Ovary (tissue), 10 donors: ENCODE measurements at regions of chr9 and their contacts with region 1.

Region 1: DNA sequence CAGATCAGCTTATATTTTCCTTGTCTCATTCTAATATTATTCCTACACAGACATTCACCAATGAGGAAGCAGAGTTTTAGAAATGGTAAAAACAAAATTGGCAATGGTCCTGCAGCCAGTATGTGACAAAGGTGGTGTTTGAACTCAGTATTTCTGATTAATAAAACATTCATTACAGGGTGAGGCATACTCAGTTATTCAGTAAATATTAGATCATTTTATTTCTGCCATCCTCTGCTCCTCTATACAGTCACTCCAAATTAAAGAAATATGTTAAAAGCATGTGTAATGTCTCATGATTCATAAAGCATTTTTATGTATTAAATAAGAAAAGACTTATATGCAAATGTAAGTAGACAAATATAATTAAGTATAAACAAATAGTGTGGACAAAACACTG is 684.6 kb upstream of the ACO1 start:
- DNase-seq: no peak
- H3K4me3 ChIP-seq: no peak overlapping the region
- H3K27ac ChIP-seq: no peak overlapping the region
- H3K4me1 ChIP-seq: no peaks in the 10 kb centered on the region
- H3K27me3 ChIP-seq: no peaks in the 10 kb centered on the region
- CTCF ChIP-seq: no peak
- EP300 ChIP-seq: no peak
- POLR2A ChIP-seq: no peak

Region 2: GRCh38 chr9:31715250-31715649 is 15.4 kb after region 1 on chr9:
- intact Hi-C with region 1: loop called in 1 of 4 experiments (anchors 2 kb)
- DNase-seq: no peak
- H3K4me3 ChIP-seq: no peak overlapping the region
- H3K27ac ChIP-seq: no peak overlapping the region
- H3K4me1 ChIP-seq: no peaks in the 10 kb centered on the region
- H3K27me3 ChIP-seq: no peaks in the 10 kb centered on the region
- CTCF ChIP-seq: no peak
- EP300 ChIP-seq: no peak
- POLR2A ChIP-seq: no peak

Region 3: DNA sequence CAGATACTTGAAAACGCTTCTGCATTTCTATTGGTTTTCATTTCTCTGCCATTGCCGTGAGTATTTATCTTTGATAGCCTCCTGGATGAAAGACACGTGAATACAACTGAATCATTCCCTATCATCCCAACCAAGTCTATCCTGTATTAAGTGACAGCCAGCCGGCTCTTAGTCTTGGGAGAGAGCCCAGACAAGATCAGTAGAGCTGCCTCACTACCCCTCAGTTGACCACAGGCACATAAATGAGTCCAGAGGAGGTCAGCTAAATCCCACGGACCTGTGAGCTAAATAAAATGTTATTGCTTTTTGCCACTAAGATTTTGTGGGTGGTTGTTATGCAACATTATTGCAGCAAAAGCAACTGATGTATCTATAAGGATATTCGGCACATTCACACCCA is 45.6 kb after region 1 on chr9:
- intact Hi-C with region 1: no loop called
- DNase-seq: no peak
- H3K4me3 ChIP-seq: no peak overlapping the region
- H3K27ac ChIP-seq: no peak overlapping the region
- H3K4me1 ChIP-seq: no peaks in the 10 kb centered on the region
- H3K27me3 ChIP-seq: no peaks in the 10 kb centered on the region
- CTCF ChIP-seq: no peak
- EP300 ChIP-seq: no peak
- POLR2A ChIP-seq: no peak

Region 4: GRCh38 chr9:31759703-31760102 is 59.9 kb after region 1 on chr9:
- intact Hi-C with region 1: loop called in 1 of 4 experiments (anchors 10 kb)
- DNase-seq: no peak
- H3K4me3 ChIP-seq: no peak overlapping the region
- H3K27ac ChIP-seq: no peak overlapping the region
- H3K4me1 ChIP-seq: no peaks in the 10 kb centered on the region
- H3K27me3 ChIP-seq: no peaks in the 10 kb centered on the region
- CTCF ChIP-seq: no peak
- EP300 ChIP-seq: no peak
- POLR2A ChIP-seq: no peak